Naive thymus-derived CD8-positive, alpha-beta T cell (primary cell): ENCODE measurements at regions of chr9 and their contacts with region 1.

Region 1: GRCh38 chr9:89477811-89478630 is 19.9 kb downstream of the SEMA4D start:
- DNase-seq: peak in 8 of 10 donors; percentile 33 to 82 (median 52)
- ATAC-seq: peak; percentile 54 to 64
- H3K4me3 Mint-ChIP-seq: peak overlapping the region; percentile 81 to 97 (median 92)
- H3K27ac Mint-ChIP-seq: peak overlapping the region; percentile 89 to 99 (median 96)
- H3K4me1 Mint-ChIP-seq: peaks cover 59 to 96% (median 91%) of the 10 kb centered on the region in 4 donors
- H3K27me3 Mint-ChIP-seq: no peaks in the 10 kb centered on the region

Region 2: GRCh38 chr9:89428901-89429890 is 48.8 kb before region 1 on chr9:
- POLR2A ChIA-PET with region 1: interaction called, 13 read pairs
- DNase-seq: peak; percentile 47 to 87 (median 72)
- ATAC-seq: peak; percentile 61 to 83
- H3K4me3 Mint-ChIP-seq: peak overlapping the region in 9 of 10 donors; percentile 39 to 85 (median 68)
- H3K27ac Mint-ChIP-seq: peak overlapping the region; percentile 81 to 98 (median 92)
- H3K4me1 Mint-ChIP-seq: peaks cover 45 to 100% (median 99%) of the 10 kb centered on the region in 4 donors
- H3K27me3 Mint-ChIP-seq: no peaks in the 10 kb centered on the region

Region 3: DNA sequence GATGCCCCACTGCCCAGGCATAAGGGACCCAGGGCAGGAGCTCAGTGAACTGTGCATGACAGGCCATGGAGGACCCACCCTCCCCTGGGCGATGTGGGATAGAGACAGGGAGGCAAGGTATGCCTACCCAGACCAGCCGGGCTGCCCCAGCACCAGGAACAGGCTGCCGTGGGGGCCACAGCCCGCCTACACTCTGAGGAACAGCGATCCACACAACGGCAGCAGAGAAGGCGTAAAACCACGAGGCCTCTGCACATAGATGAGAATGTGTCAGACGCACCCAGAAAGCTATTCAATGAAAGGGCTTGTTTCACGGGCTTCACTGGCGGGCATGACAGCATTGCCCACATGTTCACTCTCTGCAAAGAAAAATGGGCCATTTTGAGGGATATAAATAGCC is 29.6 kb before region 1 on chr9:
- POLR2A ChIA-PET with region 1: interaction called, 14 read pairs
- DNase-seq: peak in 3 of 10 donors; percentile 26 to 46 (median 45)
- ATAC-seq: peak; percentile 27 to 29
- H3K4me3 Mint-ChIP-seq: peak overlapping the region; percentile 48 to 84 (median 78)
- H3K27ac Mint-ChIP-seq: peak overlapping the region; percentile 91 to 97 (median 96)
- H3K4me1 Mint-ChIP-seq: peaks cover 59 to 95% (median 94%) of the 10 kb centered on the region in 4 donors
- H3K27me3 Mint-ChIP-seq: no peaks in the 10 kb centered on the region

Region 4: DNA sequence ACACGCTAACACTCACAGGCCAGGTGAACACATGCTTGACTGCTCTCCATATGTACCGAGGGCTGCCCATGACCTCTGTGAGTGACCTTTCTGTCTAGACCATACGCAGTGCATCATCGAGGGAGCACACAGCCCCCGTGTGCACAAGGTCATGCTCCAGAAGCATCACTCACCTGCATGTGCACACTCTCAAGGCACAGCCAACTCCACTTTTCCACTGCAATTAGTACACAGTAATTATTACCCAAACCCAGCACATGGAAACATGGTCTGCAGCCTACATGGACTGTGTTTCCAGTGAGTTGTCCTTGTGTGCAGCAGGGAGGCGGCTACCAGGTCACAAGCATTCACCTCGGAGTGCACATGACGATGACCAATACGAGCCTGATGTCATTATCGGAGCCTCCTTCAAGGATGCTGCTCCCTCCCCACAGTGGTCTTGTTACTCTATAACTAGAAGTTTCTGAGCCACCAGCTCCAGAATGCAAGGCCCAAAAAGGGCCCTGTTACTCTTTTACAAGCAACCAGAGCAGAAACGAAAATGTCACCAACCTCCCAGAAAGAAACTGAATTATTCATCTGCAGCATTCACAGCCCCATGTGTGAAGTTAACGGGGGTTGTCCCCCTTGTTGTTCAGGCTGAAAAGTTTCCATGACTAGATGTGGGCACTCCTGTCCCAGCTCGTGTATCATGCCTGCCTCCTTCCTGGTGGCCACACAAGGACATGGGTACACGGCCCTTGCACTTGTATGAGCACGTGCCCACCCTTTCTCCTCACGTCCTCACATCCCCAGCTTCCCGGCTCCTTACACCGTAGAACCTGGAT is 11.4 kb before region 1 on chr9:
- POLR2A ChIA-PET with region 1: interaction called, 62 read pairs
- DNase-seq: peak in 5 of 10 donors; percentile 31 to 65 (median 49)
- ATAC-seq: peak in 1 of 2 donors; percentile 33
- H3K4me3 Mint-ChIP-seq: peak overlapping the region; percentile 75 to 90 (median 84)
- H3K27ac Mint-ChIP-seq: peak overlapping the region; percentile 94 to 99 (median 97)
- H3K4me1 Mint-ChIP-seq: peaks cover 71 to 99% (median 98%) of the 10 kb centered on the region in 4 donors
- H3K27me3 Mint-ChIP-seq: no peaks in the 10 kb centered on the region

Region 5: GRCh38 chr9:89497978-89498851 is 20.2 kb after region 1 on chr9 and contains the start of gene SEMA4D:
- POLR2A ChIA-PET with region 1: interaction called, 28 read pairs
- DNase-seq: peak in 5 of 10 donors; percentile 21 to 56 (median 45)
- ATAC-seq: peak in 1 of 2 donors; percentile 5
- H3K4me3 Mint-ChIP-seq: peak within 1 kb of the TSS; percentile 79 to 99 (median 98)
- H3K27ac Mint-ChIP-seq: peak within 1 kb of the TSS; percentile 88 to 98 (median 96)
- H3K4me1 Mint-ChIP-seq: peaks cover 54 to 92% (median 89%) of the 10 kb centered on the region in 4 donors
- H3K27me3 Mint-ChIP-seq: no peaks in the 10 kb centered on the region
- polyA plus RNA-seq, gene SEMA4D: 154 to 359 (median 176) TPM

Region 6: GRCh38 chr9:89529243-89530035 is 51.4 kb after region 1 on chr9:
- POLR2A ChIA-PET with region 1: interaction called, 11 read pairs
- DNase-seq: peak in 4 of 10 donors; percentile 32 to 65 (median 53)
- ATAC-seq: peak; percentile 84 to 89
- H3K4me3 Mint-ChIP-seq: peak overlapping the region; percentile 31 to 87 (median 64)
- H3K27ac Mint-ChIP-seq: peak overlapping the region; percentile 81 to 97 (median 95)
- H3K4me1 Mint-ChIP-seq: peaks cover 67 to 100% (median 99%) of the 10 kb centered on the region in 4 donors
- H3K27me3 Mint-ChIP-seq: no peaks in the 10 kb centered on the region

Region 7: DNA sequence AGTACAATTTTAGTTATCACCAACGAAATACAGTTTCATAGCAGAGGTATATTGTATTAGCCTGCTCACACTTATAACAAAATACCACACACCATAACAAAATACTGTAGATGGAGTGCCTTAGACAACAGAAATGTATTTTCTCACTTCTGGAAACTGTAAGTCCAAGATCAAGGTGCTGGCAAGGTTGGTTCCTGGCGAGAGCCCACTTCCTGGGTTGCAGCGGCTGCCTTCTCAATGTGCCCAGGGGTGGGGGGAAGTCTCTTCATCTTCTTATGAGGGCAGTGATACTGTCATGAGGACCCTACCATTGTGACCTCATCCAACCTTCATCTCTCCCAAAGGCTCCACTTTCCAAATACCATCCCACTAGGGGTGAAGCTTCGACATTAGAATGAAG is 96.3 kb after region 1 on chr9:
- POLR2A ChIA-PET with region 1: no interaction called
- DNase-seq: no peak
- ATAC-seq: no peak
- H3K4me3 Mint-ChIP-seq: no peak overlapping the region
- H3K27ac Mint-ChIP-seq: peak overlapping the region in 1 of 10 donors; percentile 2
- H3K4me1 Mint-ChIP-seq: peaks cover 2 to 16% (median 11%) of the 10 kb centered on the region in 4 donors
- H3K27me3 Mint-ChIP-seq: peaks cover 0 to 8% (median 5%) of the 10 kb centered on the region in 5 donors